Colonic mucosa (tissue), 4 donors: ENCODE measurements at regions of chr2 and their contacts with region 1.

Region 1: GRCh38 chr2:28392297-28393113 is at the start of gene FOSL2:
- DNase-seq: peak; percentile 98
- H3K4me3 ChIP-seq: peak within 1 kb of the TSS; percentile 85
- H3K27ac ChIP-seq: peak within 1 kb of the TSS; percentile 100
- H3K4me1 ChIP-seq: no peaks in the 10 kb centered on the region
- H3K27me3 ChIP-seq: no peaks in the 10 kb centered on the region
- CTCF ChIP-seq: no peak
- total RNA-seq, gene FOSL2: 74.2 to 142 TPM

Region 2: DNA sequence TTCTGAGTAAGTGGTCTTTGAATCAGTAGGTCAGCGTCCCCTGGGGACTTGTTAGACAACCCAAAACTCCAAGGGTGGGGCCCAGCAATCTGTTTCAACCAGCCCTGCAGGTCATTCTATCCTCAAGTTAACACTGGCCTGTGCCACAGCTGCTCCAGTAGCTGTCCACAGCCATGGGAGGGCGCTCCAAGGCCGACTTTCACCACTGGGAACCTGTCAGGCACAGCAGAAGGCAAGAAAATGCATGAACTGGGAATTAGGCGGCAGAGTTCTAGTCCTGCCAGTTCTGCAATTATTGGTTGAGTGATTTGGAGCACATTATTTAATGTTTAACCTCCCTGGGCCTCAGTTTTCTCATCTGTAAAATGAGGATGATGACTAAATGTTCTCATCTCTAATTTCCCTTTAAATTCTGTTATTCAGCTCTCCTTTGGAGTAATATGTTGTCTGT is 638.3 kb before region 1 on chr2:
- intact Hi-C with region 1: loop called (anchors 5 kb)
- DNase-seq: peak; percentile 90
- H3K4me3 ChIP-seq: no peak overlapping the region
- H3K27ac ChIP-seq: no peak overlapping the region
- H3K4me1 ChIP-seq: no peaks in the 10 kb centered on the region
- H3K27me3 ChIP-seq: no peaks in the 10 kb centered on the region
- CTCF ChIP-seq: peak; percentile 88

Region 3: DNA sequence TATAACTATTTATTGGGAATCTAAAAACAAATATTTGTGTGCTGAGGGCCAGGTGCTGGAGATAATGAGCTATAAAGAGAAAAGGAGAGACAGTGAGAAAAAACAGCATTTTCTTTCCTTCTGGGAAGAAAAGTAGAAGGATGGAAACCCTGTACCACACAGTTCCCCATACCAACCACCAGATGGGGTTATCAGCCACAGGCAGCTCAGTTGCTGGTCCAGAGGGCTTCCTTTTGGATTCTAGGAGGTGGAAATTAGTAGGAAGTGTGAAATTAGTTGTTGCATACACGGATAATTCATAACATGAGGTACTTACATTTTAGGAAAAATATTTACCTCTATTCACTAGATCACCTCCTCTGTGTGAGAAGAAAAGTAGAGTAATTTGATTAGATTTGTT is 236.9 kb before region 1 on chr2:
- intact Hi-C with region 1: loop called (anchors 10 kb)
- DNase-seq: no peak
- H3K4me3 ChIP-seq: no peak overlapping the region
- H3K27ac ChIP-seq: no peak overlapping the region
- H3K4me1 ChIP-seq: no peaks in the 10 kb centered on the region
- H3K27me3 ChIP-seq: no peaks in the 10 kb centered on the region
- CTCF ChIP-seq: peak; percentile 51

Region 4: GRCh38 chr2:28274911-28275695 is 117.4 kb before region 1 on chr2:
- intact Hi-C with region 1: loop called (anchors 5 kb)
- DNase-seq: peak; percentile 86
- H3K4me3 ChIP-seq: no peak overlapping the region
- H3K27ac ChIP-seq: peak overlapping the region; percentile 84
- H3K4me1 ChIP-seq: peaks cover 10% of the 10 kb centered on the region
- H3K27me3 ChIP-seq: no peaks in the 10 kb centered on the region
- CTCF ChIP-seq: no peak

Region 5: GRCh38 chr2:28452534-28453081 is 60.1 kb after region 1 on chr2:
- intact Hi-C with region 1: loop called (anchors 5 kb)
- DNase-seq: peak; percentile 85
- H3K4me3 ChIP-seq: no peak overlapping the region
- H3K27ac ChIP-seq: no peak overlapping the region
- H3K4me1 ChIP-seq: no peaks in the 10 kb centered on the region
- H3K27me3 ChIP-seq: no peaks in the 10 kb centered on the region
- CTCF ChIP-seq: peak; percentile 88

Region 6: DNA sequence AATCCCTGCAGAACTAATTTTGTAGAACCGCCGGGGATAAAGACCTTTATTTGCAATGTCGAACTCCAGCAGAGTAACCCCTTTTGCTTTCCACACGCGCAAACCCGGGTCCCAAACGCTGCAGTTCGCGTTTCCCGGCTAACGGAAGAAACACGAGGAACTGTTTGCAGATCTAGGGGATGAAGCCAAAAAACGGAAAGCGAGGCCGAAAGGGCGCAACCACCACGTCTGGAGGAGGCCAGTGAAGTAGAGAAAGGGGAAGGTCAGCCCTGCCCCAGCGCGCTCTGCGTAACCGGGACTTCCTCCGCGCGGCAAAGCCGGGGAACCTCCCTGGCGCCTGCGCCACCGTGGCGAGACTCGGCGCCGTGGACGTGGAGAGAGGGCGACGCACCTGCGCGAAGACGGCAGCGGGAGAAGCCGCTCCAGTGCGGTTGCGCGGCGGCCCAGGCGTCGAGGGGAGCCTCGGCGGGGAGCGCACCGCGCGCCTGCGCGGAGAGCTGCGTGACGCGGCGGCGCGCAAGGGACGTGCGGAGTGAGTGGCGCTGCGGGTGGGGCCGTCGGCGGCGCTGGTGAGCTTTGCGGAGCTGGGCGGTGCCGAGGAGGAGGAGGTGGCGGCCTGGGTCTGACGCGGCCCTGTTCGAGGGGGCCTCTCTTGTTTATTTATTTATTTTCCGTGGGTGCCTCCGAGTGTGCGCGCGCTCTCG is 358.9 kb after region 1 on chr2 and contains the start of gene PPP1CB:
- intact Hi-C with region 1: no loop called
- DNase-seq: peak; percentile 93
- H3K4me3 ChIP-seq: peak within 1 kb of the TSS; percentile 73
- H3K27ac ChIP-seq: peak within 1 kb of the TSS; percentile 95
- H3K4me1 ChIP-seq: peaks cover 6% of the 10 kb centered on the region
- H3K27me3 ChIP-seq: no peaks in the 10 kb centered on the region
- CTCF ChIP-seq: no peak
- total RNA-seq, gene PPP1CB: 273 to 478 TPM